Right cardiac atrium (tissue), 5 donors: ENCODE measurements at regions of chr1 and their contacts with region 1.

Region 1: DNA sequence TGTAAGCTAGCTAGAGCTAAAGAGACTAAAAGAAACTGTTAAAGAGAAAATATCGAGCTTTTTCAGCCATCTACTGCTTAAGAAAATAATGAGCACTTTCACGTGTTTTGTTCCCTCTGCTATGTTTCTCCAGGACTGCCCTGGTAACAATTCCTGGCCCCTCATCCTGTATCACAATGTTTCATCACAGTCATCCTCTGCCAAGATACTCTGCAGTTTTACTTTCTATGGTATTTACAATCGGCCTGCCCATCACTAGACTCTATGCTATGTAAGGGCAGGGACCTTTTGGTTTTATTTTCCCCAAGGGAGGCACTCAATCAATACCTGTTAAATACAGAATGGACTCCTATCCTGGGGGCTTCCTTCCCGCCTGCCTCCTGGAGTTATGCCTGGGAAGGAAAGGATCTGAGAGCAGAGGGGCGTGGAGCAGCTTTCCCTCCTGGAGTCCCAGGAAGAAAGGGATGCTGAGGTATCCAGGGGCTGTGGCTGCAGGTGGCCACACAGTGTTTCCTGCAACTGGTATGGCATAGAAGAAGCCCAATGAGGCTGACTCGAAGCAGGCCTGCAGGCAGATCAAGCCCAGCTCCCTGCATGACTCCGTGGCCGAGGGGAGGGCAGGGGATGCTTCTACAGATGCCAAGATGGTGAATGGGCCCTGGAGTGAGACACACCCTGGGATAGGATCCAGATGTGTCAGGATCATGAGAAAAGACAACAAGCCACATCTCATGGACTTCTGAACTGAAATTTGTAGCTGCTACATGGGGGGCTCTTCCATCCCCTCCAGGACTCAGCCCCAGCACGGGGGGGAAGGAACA is 52.9 kb downstream of the MATN1 start:
- DNase-seq: no peak
- ATAC-seq: no peak
- H3K4me3 ChIP-seq: no peak overlapping the region
- H3K27ac ChIP-seq: no peak overlapping the region
- H3K4me1 ChIP-seq: no peaks in the 10 kb centered on the region
- H3K27me3 ChIP-seq: no peaks in the 10 kb centered on the region

Region 2: GRCh38 chr1:30058632-30059574 is 611.5 kb before region 1 on chr1:
- intact Hi-C with region 1: loop called in 1 of 4 experiments (anchors 5 kb)
- DNase-seq: no peak
- ATAC-seq: no peak
- H3K4me3 ChIP-seq: no peak overlapping the region
- H3K27ac ChIP-seq: no peak overlapping the region
- H3K4me1 ChIP-seq: no peaks in the 10 kb centered on the region
- H3K27me3 ChIP-seq: no peaks in the 10 kb centered on the region

Region 3: GRCh38 chr1:30601316-30602085 is 68.9 kb before region 1 on chr1:
- intact Hi-C with region 1: no loop called
- DNase-seq: no peak
- ATAC-seq: no peak
- H3K4me3 ChIP-seq: no peak overlapping the region
- H3K27ac ChIP-seq: no peak overlapping the region
- H3K4me1 ChIP-seq: no peaks in the 10 kb centered on the region
- H3K27me3 ChIP-seq: no peaks in the 10 kb centered on the region